CD4-positive, alpha-beta T cell (primary cell): ENCODE measurements at regions of chr14 and their contacts with region 1.

Region 1: GRCh38 chr14:49633640-49634546 is 1.2 kb downstream of the DNAAF2 start:
- DNase-seq: peak; percentile 89 to 97 (median 93)
- ATAC-seq: peak; percentile 82
- H3K4me3 ChIP-seq: peak overlapping the region; percentile 83
- H3K4me3 Mint-ChIP-seq: peak overlapping the region; percentile 98
- H3K27ac ChIP-seq: peak overlapping the region; percentile 97 to 99
- H3K27ac Mint-ChIP-seq: peak overlapping the region; percentile 83
- H3K4me1 ChIP-seq: peaks cover 51% of the 10 kb centered on the region
- H3K4me1 Mint-ChIP-seq: peaks cover 46% of the 10 kb centered on the region
- H3K27me3 ChIP-seq: no peaks in the 10 kb centered on the region
- H3K27me3 Mint-ChIP-seq: no peaks in the 10 kb centered on the region
- CTCF ChIP-seq: peak; percentile 86

Region 2: DNA sequence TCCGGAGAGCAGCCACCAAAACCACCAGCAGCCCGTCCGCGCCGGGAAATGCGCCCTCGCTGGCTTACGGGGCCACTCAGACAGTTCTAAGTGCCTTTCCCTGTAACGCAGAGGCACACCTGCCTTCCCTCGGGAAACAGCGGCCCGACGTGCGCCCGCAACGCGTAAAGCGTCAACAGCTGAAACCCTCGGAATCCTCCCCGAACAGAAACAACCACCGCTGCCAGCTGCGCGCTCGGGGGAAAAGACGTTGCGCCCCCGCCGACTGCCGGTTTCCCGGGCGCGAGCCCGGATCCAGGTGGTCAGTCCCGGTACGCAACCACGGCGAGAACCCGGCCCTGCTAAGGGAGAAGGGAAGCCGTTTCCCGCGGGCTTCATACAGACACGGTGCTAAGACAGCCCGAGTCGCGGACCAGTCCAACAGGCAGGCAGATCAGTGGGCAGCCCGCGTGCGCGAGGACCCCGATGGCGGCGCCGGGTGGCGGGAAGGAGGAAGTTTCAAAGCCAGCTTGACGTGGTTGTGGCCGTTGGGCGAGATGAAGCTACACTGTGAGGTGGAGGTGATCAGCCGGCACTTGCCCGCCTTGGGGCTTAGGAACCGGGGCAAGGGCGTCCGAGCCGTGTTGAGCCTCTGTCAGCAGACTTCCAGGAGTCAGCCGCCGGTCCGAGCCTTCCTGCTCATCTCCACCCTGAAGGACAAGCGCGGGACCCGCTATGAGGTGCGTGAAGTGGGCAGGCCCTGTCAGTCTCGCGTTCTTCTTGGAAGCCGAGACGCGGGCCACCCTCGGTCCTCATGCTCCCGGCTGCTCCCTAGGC is 35.2 kb before region 1 on chr14 and contains the start of gene LRR1:
- CTCF ChIA-PET with region 1: interaction called, 11 read pairs
- POLR2A ChIA-PET with region 1: interaction called, 47 read pairs
- intact Hi-C with region 1: no loop called
- DNase-seq: peak; percentile 72 to 91 (median 84)
- ATAC-seq: peak; percentile 75
- H3K4me3 ChIP-seq: peak within 1 kb of the TSS; percentile 98
- H3K4me3 Mint-ChIP-seq: peak within 1 kb of the TSS; percentile 97
- H3K27ac ChIP-seq: peak within 1 kb of the TSS; percentile 91 to 95
- H3K27ac Mint-ChIP-seq: peak within 1 kb of the TSS; percentile 98
- H3K4me1 ChIP-seq: peaks cover 13% of the 10 kb centered on the region
- H3K4me1 Mint-ChIP-seq: peaks cover 43% of the 10 kb centered on the region
- H3K27me3 ChIP-seq: no peaks in the 10 kb centered on the region
- H3K27me3 Mint-ChIP-seq: no peaks in the 10 kb centered on the region
- CTCF ChIP-seq: no peak
- total RNA-seq, gene LRR1: 3.2 to 5.8 TPM

Region 3: GRCh38 chr14:49692811-49693734 is 59.2 kb after region 1 on chr14 and contains the start of gene KLHDC1:
- CTCF ChIA-PET with region 1: interaction called, 15 read pairs
- POLR2A ChIA-PET with region 1: interaction called, 20 read pairs
- intact Hi-C with region 1: loop called (anchors 2 to 5 kb)
- DNase-seq: peak; percentile 66 to 90 (median 78)
- ATAC-seq: peak; percentile 85
- H3K4me3 ChIP-seq: peak within 1 kb of the TSS; percentile 69
- H3K4me3 Mint-ChIP-seq: peak within 1 kb of the TSS; percentile 97
- H3K27ac ChIP-seq: peak within 1 kb of the TSS; percentile 60 to 70
- H3K27ac Mint-ChIP-seq: peak within 1 kb of the TSS; percentile 88
- H3K4me1 ChIP-seq: peaks cover 10% of the 10 kb centered on the region
- H3K4me1 Mint-ChIP-seq: peaks cover 50% of the 10 kb centered on the region
- H3K27me3 ChIP-seq: no peaks in the 10 kb centered on the region
- H3K27me3 Mint-ChIP-seq: no peaks in the 10 kb centered on the region
- CTCF ChIP-seq: no peak
- total RNA-seq, gene KLHDC1: 9.8 to 11.8 TPM

Region 4: DNA sequence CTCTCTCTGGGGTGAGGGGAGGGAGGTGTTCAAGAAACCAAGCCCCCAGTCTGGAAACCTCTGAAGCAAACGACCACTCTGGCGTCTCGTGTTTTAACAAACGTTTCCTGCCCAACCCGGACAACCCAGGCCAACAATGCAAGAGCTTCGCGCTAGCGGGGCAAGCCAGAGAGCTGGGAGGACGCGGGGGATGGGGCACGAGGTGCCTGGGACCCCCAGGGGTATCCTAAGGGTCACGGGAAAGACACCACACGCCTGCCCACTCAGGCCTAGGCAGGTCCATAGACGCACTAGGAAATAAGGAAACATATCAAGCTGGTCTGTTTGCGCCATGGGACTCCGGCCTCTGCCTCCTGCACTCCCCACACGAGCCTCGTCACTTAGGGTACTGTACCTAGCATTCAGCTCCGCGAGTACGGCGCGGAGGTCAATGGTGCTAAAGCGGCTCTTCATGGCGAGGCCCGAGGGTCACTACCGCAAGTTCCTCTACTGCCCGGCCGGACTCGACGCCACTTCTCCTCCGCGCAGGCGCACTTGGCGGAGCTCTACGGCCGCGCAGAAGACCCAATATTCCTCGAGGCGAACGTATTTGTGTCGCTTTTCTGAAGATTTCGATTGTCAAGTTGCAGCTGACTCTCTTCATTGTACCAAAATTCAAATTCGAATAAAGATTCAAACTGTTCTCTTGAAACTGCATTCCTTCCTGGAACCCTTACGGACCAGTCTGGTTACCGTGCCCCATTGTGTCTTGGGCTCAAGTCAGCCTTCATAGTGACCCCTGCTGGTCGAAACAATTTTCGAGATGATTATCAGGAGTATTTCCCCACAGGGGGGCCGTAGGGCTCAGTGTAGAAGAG is 218.6 kb after region 1 on chr14 and contains the start of gene NEMF:
- CTCF ChIA-PET with region 1: interaction called, 11 read pairs
- POLR2A ChIA-PET with region 1: interaction called, 19 read pairs
- intact Hi-C with region 1: loop called in 1 of 2 experiments (anchors 2 kb)
- DNase-seq: peak; percentile 67 to 91 (median 72)
- ATAC-seq: peak; percentile 75
- H3K4me3 ChIP-seq: peak within 1 kb of the TSS; percentile 97
- H3K4me3 Mint-ChIP-seq: peak within 1 kb of the TSS; percentile 99
- H3K27ac ChIP-seq: peak within 1 kb of the TSS; percentile 64 to 80
- H3K27ac Mint-ChIP-seq: peak within 1 kb of the TSS; percentile 91
- H3K4me1 ChIP-seq: peaks cover 17% of the 10 kb centered on the region
- H3K4me1 Mint-ChIP-seq: peaks cover 46% of the 10 kb centered on the region
- H3K27me3 ChIP-seq: no peaks in the 10 kb centered on the region
- H3K27me3 Mint-ChIP-seq: no peaks in the 10 kb centered on the region
- CTCF ChIP-seq: peak; percentile 89
- total RNA-seq, gene NEMF: 96.0 to 97.7 TPM

Region 5: GRCh38 chr14:50532502-50533240 is 898.8 kb after region 1 on chr14 and contains the start of gene MAP4K5:
- CTCF ChIA-PET with region 1: no interaction called
- POLR2A ChIA-PET with region 1: no interaction called
- intact Hi-C with region 1: loop called in 1 of 2 experiments (anchors 5 kb)
- DNase-seq: peak; percentile 77 to 95 (median 86)
- ATAC-seq: peak; percentile 92
- H3K4me3 ChIP-seq: peak within 1 kb of the TSS; percentile 87
- H3K4me3 Mint-ChIP-seq: peak within 1 kb of the TSS; percentile 95
- H3K27ac ChIP-seq: peak within 1 kb of the TSS; percentile 53 to 57
- H3K27ac Mint-ChIP-seq: peak within 1 kb of the TSS; percentile 86
- H3K4me1 ChIP-seq: peaks cover 23% of the 10 kb centered on the region
- H3K4me1 Mint-ChIP-seq: peaks cover 55% of the 10 kb centered on the region
- H3K27me3 ChIP-seq: no peaks in the 10 kb centered on the region
- H3K27me3 Mint-ChIP-seq: no peaks in the 10 kb centered on the region
- CTCF ChIP-seq: peak; percentile 66
- total RNA-seq, gene MAP4K5: 32.4 to 34.5 TPM